Endothelial cell of umbilical vein (primary cell): ENCODE measurements at regions of chr14 and their contacts with region 1.

Region 1: DNA sequence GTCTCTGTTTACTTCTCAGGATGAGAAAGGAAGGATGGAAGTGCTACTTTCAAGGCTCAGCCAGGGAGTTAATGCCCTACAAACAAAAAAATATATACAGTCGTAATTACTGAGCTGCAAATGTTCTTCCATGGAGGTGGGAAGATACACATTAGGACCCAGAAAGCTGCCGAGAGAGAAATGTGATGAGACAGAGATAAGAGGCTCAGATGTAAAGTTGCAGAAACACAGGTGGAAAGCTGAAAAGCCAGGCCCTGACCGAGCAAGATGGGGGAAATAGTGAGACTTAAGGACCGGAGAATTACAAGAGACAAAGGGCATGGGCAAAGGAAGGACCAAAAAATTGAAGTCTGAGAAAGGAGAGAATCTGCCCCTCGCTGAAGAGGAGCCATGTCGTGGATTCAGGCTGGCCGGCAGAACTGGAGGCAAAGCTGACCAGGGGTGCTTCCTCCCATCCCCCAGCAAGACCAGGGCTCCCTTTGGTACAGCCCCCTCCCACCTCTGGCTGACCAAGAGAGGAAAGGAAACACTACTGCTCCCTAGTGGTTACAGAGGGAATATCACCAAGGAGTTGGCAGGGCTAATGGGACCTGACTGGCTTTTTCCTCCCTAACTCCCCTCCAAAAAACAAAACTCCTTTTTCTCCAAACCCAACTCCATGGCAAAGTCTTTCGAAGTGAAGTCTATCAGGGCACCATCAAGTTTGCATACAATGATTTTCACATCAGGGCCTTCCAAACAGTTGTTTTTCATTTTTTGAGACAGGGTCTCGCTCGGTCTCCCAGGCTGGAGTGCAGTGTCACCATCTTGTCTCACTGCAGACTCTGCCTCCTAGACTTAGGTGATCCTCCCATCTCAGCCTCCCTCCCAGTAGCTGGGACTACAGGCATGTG is 12.1 kb downstream of the ZFHX2 start:
- DNase-seq: peak; percentile 45
- H3K4me3 ChIP-seq: no peak overlapping the region
- H3K27ac ChIP-seq: no peak overlapping the region
- H3K4me1 ChIP-seq: no peaks in the 10 kb centered on the region
- H3K27me3 ChIP-seq: no peaks in the 10 kb centered on the region
- CTCF ChIP-seq: peak; percentile 66 to 78
- POLR2A ChIP-seq: no peak

Region 2: GRCh38 chr14:23025151-23025814 is 514.2 kb before region 1 on chr14:
- CTCF ChIA-PET with region 1: no interaction called
- POLR2A ChIA-PET with region 1: no interaction called
- dilution Hi-C with region 1: no loop called
- intact Hi-C with region 1: no loop called
- DNase-seq: no peak
- H3K4me3 ChIP-seq: no peak overlapping the region
- H3K27ac ChIP-seq: no peak overlapping the region
- H3K4me1 ChIP-seq: peaks cover 4% of the 10 kb centered on the region
- H3K27me3 ChIP-seq: no peaks in the 10 kb centered on the region
- CTCF ChIP-seq: no peak
- POLR2A ChIP-seq: no peak

Region 3: GRCh38 chr14:23430788-23431085 is 108.8 kb before region 1 on chr14:
- CTCF ChIA-PET with region 1: no interaction called
- POLR2A ChIA-PET with region 1: no interaction called
- dilution Hi-C with region 1: no loop called
- intact Hi-C with region 1: no loop called
- DNase-seq: no peak
- H3K4me3 ChIP-seq: no peak overlapping the region
- H3K27ac ChIP-seq: no peak overlapping the region
- H3K4me1 ChIP-seq: no peaks in the 10 kb centered on the region
- H3K27me3 ChIP-seq: no peaks in the 10 kb centered on the region
- CTCF ChIP-seq: no peak
- POLR2A ChIP-seq: no peak

Region 4: GRCh38 chr14:23494223-23494622 is 45.3 kb before region 1 on chr14:
- CTCF ChIA-PET with region 1: no interaction called
- POLR2A ChIA-PET with region 1: no interaction called
- dilution Hi-C with region 1: no loop called
- intact Hi-C with region 1: no loop called
- DNase-seq: no peak
- H3K4me3 ChIP-seq: no peak overlapping the region
- H3K27ac ChIP-seq: no peak overlapping the region
- H3K4me1 ChIP-seq: no peaks in the 10 kb centered on the region
- H3K27me3 ChIP-seq: no peaks in the 10 kb centered on the region
- CTCF ChIP-seq: no peak
- POLR2A ChIP-seq: no peak

Region 5: DNA sequence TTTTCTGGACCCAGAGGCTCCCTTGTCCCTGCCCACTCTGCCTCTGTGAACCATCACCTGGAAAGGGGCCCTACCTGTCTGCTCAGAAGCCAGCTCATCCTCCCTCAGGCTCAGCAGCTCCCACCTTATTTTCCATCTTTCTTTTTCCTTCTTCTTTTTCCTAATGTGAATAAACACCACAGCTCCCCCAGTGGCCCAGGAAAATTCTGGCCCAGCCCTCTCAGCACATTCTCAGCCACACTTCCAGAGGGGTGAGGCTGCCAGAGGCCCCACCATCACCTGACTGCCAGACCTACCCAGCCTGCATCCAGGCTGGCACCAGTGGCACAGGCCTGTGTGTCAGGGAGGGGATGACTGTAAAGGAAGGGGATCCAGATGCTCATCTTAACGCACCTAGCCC is 10.9 kb before region 1 on chr14:
- CTCF ChIA-PET with region 1: interaction called, 10 read pairs
- POLR2A ChIA-PET with region 1: no interaction called
- dilution Hi-C with region 1: no loop called
- intact Hi-C with region 1: no loop called
- DNase-seq: no peak
- H3K4me3 ChIP-seq: no peak overlapping the region
- H3K27ac ChIP-seq: no peak overlapping the region
- H3K4me1 ChIP-seq: no peaks in the 10 kb centered on the region
- H3K27me3 ChIP-seq: no peaks in the 10 kb centered on the region
- CTCF ChIP-seq: peak in 1 of 2 donors; percentile 5
- POLR2A ChIP-seq: no peak